Panc1 (cell line): ENCODE measurements at regions of chr19 and their contacts with region 1.

Region 1: GRCh38 chr19:14985133-14985532 is 5.5 kb upstream of the SLC1A6 start:
- DNase-seq: no peak
- ATAC-seq: no peak
- H3K4me3 ChIP-seq: no peak overlapping the region
- H3K27ac ChIP-seq: no peak overlapping the region
- H3K4me1 ChIP-seq: no peaks in the 10 kb centered on the region
- H3K27me3 ChIP-seq: no peaks in the 10 kb centered on the region
- CTCF ChIP-seq: no peak

Region 2: DNA sequence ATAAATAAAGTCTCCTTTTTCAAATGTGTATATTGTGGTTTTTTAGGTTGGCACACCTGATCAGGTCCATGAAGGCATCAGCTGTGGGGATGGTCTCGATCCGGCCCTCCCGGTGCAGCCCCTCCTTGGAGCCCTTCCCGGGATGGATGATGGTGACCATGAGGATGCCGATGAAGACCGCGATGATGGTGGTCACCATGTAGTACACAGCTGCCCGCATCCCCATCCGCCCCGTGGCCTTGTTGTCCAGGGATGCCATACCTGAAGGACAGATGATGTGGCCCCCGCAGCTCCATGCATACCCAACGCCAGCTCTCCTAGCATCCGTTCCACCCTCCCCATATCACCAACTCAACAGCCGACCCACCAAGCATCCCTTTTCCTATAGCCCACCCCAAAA is 16.9 kb before region 1 on chr19:
- CTCF ChIA-PET with region 1: interaction called, 7 read pairs
- POLR2A ChIA-PET with region 1: interaction called, 14 read pairs
- in situ Hi-C with region 1: no loop called
- intact Hi-C with region 1: no loop called
- DNase-seq: no peak
- ATAC-seq: no peak
- H3K4me3 ChIP-seq: no peak overlapping the region
- H3K27ac ChIP-seq: no peak overlapping the region
- H3K4me1 ChIP-seq: no peaks in the 10 kb centered on the region
- H3K27me3 ChIP-seq: no peaks in the 10 kb centered on the region
- CTCF ChIP-seq: no peak